ENCODE measurements at regions of chr7 and their contacts with region 1.

Region 1: DNA sequence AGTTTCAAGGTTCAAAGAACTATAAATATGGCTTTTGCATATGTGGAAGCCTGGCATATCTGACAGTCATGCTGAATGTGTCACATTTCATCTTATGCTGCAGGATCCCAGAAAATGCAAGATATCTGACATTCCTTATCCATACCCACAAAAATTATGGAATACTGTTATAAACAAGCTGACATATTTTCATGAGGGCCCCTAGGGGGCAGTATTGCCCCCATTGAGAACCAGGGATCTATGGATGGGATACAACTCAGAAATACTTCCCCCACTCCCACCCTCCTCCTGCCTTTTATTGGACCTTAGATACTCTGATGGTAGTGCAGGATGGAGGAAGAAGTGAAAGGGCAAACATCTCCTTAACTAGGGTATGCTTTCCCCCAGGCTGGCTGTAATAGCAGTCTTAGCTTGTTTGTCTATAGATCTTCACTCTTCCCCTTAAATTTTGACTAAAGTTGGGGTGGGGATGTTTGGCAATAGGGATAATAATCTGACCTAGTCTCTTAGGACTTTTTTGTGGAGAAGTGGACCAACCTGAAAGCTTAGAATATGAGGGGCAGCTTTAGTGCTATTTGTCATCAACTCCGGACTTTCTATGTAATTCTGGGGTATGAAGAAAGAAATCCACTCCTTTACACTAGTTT is 3.5 kb upstream of the GNGT1 start:
- DNase-seq: no peak
- H3K4me3 ChIP-seq: no peak overlapping the region
- H3K27ac ChIP-seq: no peak overlapping the region
- H3K27me3 ChIP-seq: peaks cover 0 to 31% (median 0%) of the 10 kb centered on the region in 45 donors
- CTCF ChIP-seq: peak; percentile 42 to 78 (median 65)

Region 2: GRCh38 chr7:94095316-94096009 is 192.6 kb after region 1 on chr7:
- intact Hi-C with region 1: loop called in 1 of 2 experiments (anchors 10 kb)
- DNase-seq: no peak
- H3K4me3 ChIP-seq: no peak overlapping the region
- H3K27ac ChIP-seq: no peak overlapping the region
- H3K27me3 ChIP-seq: peaks cover 0 to 13% (median 0%) of the 10 kb centered on the region in 45 donors
- CTCF ChIP-seq: no peak

Measured in dorsolateral prefrontal cortex (tissue), 120 donors.